ENCODE measurements at regions of chr1 and their contacts with region 1.

Region 1: DNA sequence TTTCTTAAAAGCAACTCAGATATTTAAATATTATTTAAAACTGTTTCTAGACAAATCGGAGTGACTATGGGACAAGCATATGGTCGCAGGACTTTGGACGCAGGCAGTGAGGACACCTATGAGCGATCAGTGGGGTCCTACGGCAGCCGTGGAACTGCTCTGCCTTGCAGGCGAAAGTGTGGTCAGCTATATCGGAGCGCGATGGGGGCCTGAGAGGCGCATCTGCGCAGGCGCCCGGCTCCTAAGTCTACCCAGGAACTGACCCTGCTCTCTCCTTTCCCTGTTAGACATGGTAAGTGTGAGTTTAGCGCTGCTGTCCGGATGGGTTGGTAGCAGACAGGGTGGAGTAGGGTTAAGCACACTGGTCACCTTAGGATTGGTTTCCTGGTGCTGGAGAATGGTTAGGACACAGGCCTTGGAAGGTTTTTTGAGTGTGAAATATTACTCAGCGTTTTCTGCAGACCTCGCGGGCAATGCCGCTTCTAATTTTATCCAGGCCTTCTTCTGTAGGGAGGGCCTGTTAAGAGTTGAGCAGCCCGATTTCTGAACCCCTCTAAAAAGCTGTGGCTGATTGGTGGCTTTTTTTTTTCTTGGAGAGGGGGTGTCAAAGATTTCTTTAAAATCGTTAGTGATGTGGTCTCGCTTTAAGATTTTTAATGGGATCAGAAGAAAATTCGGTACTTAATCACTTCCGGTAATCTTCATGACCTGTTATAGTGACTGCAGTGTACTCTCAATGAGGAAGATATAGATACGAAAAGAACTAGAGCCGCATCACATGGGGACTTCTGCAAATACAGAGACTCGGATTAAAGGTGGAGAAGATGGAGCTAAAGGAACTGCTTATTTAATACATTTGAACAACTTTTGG is at the start of gene RABGGTB:
- DNase-seq: peak; percentile 97
- H3K4me3 ChIP-seq: peak within 1 kb of the TSS; percentile 27 to 80 (median 62)
- H3K27ac ChIP-seq: peak within 1 kb of the TSS; percentile 89 to 91 (median 90)
- H3K4me1 ChIP-seq: peaks cover 33 to 52% (median 46%) of the 10 kb centered on the region in 4 donors
- H3K27me3 ChIP-seq: no peaks in the 10 kb centered on the region
- CTCF ChIP-seq: peak in 1 of 5 experiments; percentile 9
- EP300 ChIP-seq: no peak
- POLR2A ChIP-seq: peak; percentile 95
- total RNA-seq, gene RABGGTB: 21.3 to 126 (median 68.4) TPM

Region 2: DNA sequence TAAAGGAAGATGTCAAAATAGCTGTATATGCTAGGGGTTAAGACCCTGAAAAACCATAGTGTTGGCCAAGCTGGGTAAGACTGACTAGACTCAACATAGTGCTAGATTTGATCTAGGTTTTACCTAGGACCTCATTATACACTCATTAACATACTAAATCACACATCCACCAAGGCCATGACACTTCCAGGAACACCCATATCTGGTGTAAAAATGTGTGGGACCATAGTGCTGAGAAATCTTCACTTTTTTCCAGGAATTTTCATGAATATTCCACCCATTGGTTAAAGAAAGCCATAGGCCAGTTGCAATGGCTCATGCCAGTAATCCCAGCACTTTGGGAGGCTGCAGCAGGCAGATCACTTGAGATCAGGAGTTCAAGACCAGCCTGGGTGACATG is 95.7 kb before region 1 on chr1:
- in situ Hi-C with region 1: no loop called
- intact Hi-C with region 1: no loop called
- DNase-seq: no peak
- H3K4me3 ChIP-seq: no peak overlapping the region
- H3K27ac ChIP-seq: no peak overlapping the region
- H3K4me1 ChIP-seq: no peaks in the 10 kb centered on the region
- H3K27me3 ChIP-seq: no peaks in the 10 kb centered on the region
- CTCF ChIP-seq: no peak
- EP300 ChIP-seq: no peak
- POLR2A ChIP-seq: no peak

Region 3: GRCh38 chr1:75724472-75725022 is 61.7 kb before region 1 on chr1 and contains the start of gene ACADM:
- in situ Hi-C with region 1: loop called in 1 of 4 experiments (anchors 10 kb)
- intact Hi-C with region 1: no loop called
- DNase-seq: peak; percentile 91
- H3K4me3 ChIP-seq: peak within 1 kb of the TSS; percentile 51 to 65 (median 60)
- H3K27ac ChIP-seq: peak within 1 kb of the TSS; percentile 89 to 93 (median 90)
- H3K4me1 ChIP-seq: peaks cover 0 to 32% (median 6%) of the 10 kb centered on the region in 4 donors
- H3K27me3 ChIP-seq: no peaks in the 10 kb centered on the region
- CTCF ChIP-seq: no peak
- EP300 ChIP-seq: no peak
- POLR2A ChIP-seq: peak; percentile 85
- total RNA-seq, gene ACADM: 34.4 to 138 (median 91.5) TPM